Activated CD4-positive, alpha-beta T cell treated with anti-CD3 and anti-CD28 coated beads, Interleukin-2, amount 10 ng/mL, durations not matched to agents 7 days and 5 days (primary cell): ENCODE measurements at regions of chr1 and their contacts with region 1.

Region 1: DNA sequence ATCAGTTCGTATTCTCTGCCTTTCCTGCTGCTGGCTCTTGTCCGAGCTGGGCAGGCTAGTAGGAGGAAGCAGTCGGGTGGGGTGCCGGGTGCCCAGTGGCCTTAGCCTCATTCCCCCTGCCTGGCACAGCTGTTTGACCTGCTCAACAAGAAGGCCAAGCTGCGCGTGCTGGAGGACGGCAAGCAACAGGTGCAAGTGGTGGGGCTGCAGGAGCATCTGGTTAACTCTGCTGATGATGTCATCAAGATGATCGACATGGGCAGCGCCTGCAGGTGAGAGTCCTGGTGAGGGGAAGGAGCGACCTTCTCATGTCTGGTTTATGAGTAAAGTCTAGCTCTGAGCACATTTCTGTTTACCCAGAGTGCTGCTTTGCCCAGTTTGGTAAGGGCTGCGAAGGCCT is 16.3 kb upstream of the RPS8 start:
- DNase-seq: no peak
- H3K4me3 Mint-ChIP-seq: no peak overlapping the region
- H3K27ac Mint-ChIP-seq: no peak overlapping the region
- H3K4me1 Mint-ChIP-seq: peaks cover 9% of the 10 kb centered on the region
- H3K27me3 Mint-ChIP-seq: no peaks in the 10 kb centered on the region

Region 2: DNA sequence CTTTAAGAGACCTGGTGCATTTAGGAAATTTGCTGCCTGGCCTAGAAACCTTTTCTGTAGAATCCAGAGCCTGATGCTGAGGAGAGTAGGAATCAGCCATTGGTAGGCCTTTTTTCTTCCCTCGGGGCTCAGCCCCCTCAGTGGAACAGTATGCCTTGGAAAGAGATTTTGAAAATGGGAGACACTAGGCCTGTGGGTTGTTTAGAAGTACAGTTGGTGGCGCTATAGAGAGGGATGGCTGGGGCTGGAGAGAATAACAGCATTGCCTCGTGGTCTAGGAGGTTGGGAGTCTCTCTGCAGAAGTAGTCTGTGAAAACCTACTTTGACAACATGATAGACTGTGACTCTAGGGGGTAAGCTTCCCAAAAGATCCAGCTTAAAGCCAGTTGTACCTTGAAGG is 11.2 kb before region 1 on chr1:
- CTCF ChIA-PET with region 1: interaction called, 21 read pairs
- POLR2A ChIA-PET with region 1: no interaction called
- DNase-seq: no peak
- H3K4me3 Mint-ChIP-seq: no peak overlapping the region
- H3K27ac Mint-ChIP-seq: peak overlapping the region; percentile 6
- H3K4me1 Mint-ChIP-seq: peaks cover 33% of the 10 kb centered on the region
- H3K27me3 Mint-ChIP-seq: no peaks in the 10 kb centered on the region